Activated T-helper 1 cell treated with anti-CD3 and anti-CD28 coated beads, Interleukin-12 subunit alpha, Interleukin-12 subunit beta, Interleukin-2, Interleukin-4 antibody, amounts not matched to agents 30 ng/mL and 10 ng/mL and 1 ng/mL, durations not matched to agents 14 hours and 24 hours and 36 hours (primary cell): ENCODE measurements at regions of chr21 and their contacts with region 1.

Region 1: DNA sequence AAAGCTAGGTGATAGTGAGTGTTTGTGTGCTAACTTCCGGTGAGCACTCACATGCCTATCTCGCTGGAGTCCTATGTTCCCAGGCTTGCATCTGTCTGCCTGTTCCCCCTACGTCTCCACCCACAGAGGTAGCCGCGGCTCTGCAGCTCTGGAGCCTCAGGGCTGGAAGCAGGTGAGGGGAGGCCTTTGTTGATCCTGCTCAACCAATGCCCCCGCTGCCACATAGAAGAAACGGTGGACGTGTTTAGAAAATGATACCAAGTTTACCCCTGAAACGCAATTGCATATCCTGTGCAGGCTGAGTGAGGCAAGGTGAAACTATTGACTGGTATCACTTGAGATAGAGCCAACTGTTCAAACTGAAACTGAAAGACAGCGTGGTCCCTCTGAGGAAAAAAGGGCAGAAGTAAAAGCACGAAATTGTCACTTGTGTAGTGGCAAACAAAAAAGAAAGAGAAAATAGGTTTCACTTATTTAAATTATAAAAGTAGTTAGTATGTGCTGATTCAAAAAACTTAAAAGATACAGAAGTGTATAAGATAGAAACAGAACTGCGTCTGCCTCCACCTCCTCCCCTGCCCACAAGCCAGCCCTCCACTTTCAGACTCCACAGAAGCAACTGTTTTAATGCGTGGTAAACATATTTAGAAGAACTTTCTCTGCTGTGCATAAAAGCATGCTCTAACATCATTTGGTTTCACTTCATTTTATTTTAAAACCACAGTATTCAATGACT is 38.6 kb upstream of the ETS2 start:
- DNase-seq: peak; percentile 72
- H3K4me3 Mint-ChIP-seq: peak overlapping the region; percentile 77
- H3K27ac Mint-ChIP-seq: peak overlapping the region; percentile 93
- H3K4me1 Mint-ChIP-seq: peaks cover 40% of the 10 kb centered on the region
- H3K27me3 Mint-ChIP-seq: peaks cover 9% of the 10 kb centered on the region

Region 2: DNA sequence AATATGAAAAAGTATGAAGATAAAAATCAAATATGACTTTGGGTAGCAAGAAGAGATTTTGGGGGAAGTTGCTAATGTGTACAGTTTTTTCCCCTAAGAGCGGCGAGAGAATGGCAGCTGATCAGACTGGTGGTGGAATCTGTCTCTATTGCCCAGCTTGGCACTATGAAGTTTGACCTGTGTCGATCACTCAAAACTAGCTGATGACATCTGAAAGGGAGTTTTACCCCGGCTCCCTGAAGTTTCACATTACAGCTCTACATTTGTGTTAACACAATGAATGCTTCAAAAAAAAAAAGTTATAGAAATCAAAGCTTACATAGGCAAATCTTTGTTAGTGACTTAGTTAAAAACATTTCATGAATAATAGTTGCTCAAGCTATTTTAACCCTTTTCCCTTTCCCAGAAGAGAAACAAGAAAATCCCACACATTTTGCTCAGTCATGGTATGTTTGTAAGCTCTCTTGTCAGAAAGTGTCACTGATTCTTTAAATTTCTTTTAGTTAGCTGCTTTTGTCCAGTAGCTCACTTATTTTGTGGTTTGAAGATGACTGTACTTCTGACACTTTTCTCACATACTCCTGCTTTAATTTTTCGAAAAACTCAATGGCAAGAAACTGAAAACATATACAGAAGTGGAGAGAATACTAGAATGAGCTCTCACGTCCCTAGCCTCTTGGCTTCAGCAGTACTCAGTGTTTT is 1359.3 kb before region 1 on chr21:
- intact Hi-C with region 1: loop called (anchors 5 kb)
- DNase-seq: no peak
- H3K4me3 Mint-ChIP-seq: no peak overlapping the region
- H3K27ac Mint-ChIP-seq: peak overlapping the region; percentile 79
- H3K4me1 Mint-ChIP-seq: peaks cover 74% of the 10 kb centered on the region
- H3K27me3 Mint-ChIP-seq: no peaks in the 10 kb centered on the region

Region 3: DNA sequence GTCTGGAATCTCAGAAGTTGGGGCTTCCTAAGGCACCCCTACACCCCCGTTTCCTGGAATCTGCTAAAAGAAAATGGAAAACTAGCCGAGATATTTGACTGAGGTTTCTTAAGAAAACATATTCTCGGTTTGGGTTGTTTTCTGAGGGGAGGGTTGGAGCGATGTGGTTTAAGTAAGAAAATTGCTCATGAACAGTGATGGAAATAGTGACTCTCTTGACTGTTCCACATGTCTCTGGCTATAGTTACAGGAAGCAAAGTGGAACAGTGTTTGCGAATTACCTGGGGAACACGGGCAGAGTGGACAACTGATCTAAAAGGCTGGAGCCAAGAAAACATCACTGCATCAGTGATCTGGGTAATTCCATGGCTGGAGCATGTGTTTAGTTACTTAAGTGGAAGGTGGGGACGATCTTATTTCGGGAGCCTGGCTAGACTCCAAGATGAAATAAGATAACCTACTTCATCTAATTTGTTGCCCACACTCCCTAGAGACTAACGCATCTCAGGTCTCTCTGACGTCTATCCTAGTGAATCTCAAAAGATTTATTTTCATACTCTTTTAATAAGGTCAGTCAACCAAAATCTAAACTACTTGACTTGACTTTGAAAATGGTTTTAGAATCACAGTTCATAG is 417.9 kb before region 1 on chr21:
- intact Hi-C with region 1: loop called (anchors 2 kb)
- DNase-seq: no peak
- H3K4me3 Mint-ChIP-seq: no peak overlapping the region
- H3K27ac Mint-ChIP-seq: peak overlapping the region; percentile 91
- H3K4me1 Mint-ChIP-seq: peaks cover 37% of the 10 kb centered on the region
- H3K27me3 Mint-ChIP-seq: peaks cover 3% of the 10 kb centered on the region

Region 4: GRCh38 chr21:38712071-38712470 is 55.1 kb before region 1 on chr21:
- intact Hi-C with region 1: no loop called
- DNase-seq: no peak
- H3K4me3 Mint-ChIP-seq: no peak overlapping the region
- H3K27ac Mint-ChIP-seq: no peak overlapping the region
- H3K4me1 Mint-ChIP-seq: no peaks in the 10 kb centered on the region
- H3K27me3 Mint-ChIP-seq: peaks cover 15% of the 10 kb centered on the region

Region 5: GRCh38 chr21:38805328-38806152 is 38.4 kb after region 1 on chr21 and contains the start of gene ETS2:
- intact Hi-C with region 1: loop called (anchors 1 kb)
- DNase-seq: peak; percentile 72
- H3K4me3 Mint-ChIP-seq: peak within 1 kb of the TSS; percentile 92
- H3K27ac Mint-ChIP-seq: peak within 1 kb of the TSS; percentile 90
- H3K4me1 Mint-ChIP-seq: peaks cover 27% of the 10 kb centered on the region
- H3K27me3 Mint-ChIP-seq: peaks cover 7% of the 10 kb centered on the region
- total RNA-seq, gene ETS2: 22.9 and 25.8 TPM in 2 replicates

Region 6: DNA sequence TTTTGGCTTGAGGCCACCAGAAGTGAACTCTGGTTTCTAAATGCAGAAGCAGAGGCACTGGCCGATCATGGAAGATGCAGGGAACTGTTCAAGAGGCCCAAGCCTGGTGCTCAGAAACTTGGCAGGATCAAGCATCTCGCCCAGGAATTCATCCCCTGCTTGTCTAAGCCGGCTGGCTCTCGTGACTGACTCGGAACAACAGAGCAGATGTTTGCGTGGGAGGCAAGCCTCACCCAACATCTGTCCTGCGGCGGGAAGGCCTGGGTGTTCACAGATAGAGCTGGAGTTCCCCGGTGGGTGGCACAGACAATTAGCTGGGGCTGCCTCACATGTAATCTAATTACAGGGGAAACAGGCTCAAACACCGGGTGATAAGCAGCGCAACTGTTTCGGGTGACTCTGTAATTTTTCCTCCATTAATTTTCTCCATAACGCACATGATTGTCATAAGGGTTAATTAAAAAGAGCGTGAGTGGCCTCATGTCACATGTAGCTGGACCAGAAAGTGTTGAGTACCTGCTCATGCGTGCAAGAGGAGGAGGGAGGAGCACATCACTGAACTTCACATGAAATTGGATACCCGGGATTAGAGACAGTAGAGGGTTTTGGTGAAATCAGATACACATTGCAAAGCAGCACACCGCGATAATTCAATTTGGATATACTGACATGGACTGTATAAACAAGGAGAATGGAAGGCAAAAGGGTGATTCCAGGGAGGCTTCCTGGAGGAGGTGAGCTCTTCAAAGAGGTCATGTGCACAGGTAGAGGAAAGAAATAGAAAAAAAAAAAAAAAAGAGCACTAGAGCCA is 218.6 kb after region 1 on chr21:
- intact Hi-C with region 1: loop called (anchors 1 kb)
- DNase-seq: peak; percentile 50
- H3K4me3 Mint-ChIP-seq: peak overlapping the region; percentile 80
- H3K27ac Mint-ChIP-seq: peak overlapping the region; percentile 93
- H3K4me1 Mint-ChIP-seq: peaks cover 36% of the 10 kb centered on the region
- H3K27me3 Mint-ChIP-seq: peaks cover 9% of the 10 kb centered on the region

Region 7: GRCh38 chr21:39313571-39314142 is 546.5 kb after region 1 on chr21 and contains the start of gene BRWD1:
- intact Hi-C with region 1: loop called (anchors 5 kb)
- DNase-seq: peak; percentile 75
- H3K4me3 Mint-ChIP-seq: peak within 1 kb of the TSS; percentile 92
- H3K27ac Mint-ChIP-seq: peak within 1 kb of the TSS; percentile 97
- H3K4me1 Mint-ChIP-seq: peaks cover 31% of the 10 kb centered on the region
- H3K27me3 Mint-ChIP-seq: no peaks in the 10 kb centered on the region
- total RNA-seq, gene BRWD1: 34.7 and 38.1 TPM in 2 replicates